ENCODE measurements at regions of chr6 and their contacts with region 1.

Region 1: GRCh38 chr6:30130887-30131862 is 4.8 kb upstream of the TRIM40 start:
- DNase-seq: peak; percentile 82 to 84
- ATAC-seq: peak; percentile 86 to 97
- H3K4me3 ChIP-seq: no peak overlapping the region
- H3K27ac ChIP-seq: peak overlapping the region; percentile 44 to 70; a peak in 4 of 6 replicates
- H3K4me1 ChIP-seq: peaks cover 26% of the 10 kb centered on the region
- CTCF ChIP-seq: peak; percentile 95
- EP300 ChIP-seq: no peak
- POLR2A ChIP-seq: no peak
- RAD21 ChIP-seq: peak; percentile 81 to 86

Region 2: GRCh38 chr6:29847871-29848630 is 283.1 kb before region 1 on chr6:
- CTCF ChIA-PET with region 1: interaction called, 13 read pairs
- POLR2A ChIA-PET with region 1: no interaction called
- DNase-seq: peak; percentile 58 to 60
- ATAC-seq: peak; percentile 94 to 99
- H3K4me3 ChIP-seq: no peak overlapping the region
- H3K27ac ChIP-seq: no peak overlapping the region
- H3K4me1 ChIP-seq: peaks cover 7% of the 10 kb centered on the region; the same call in 1 of the 3 replicates
- CTCF ChIP-seq: peak; percentile 86
- EP300 ChIP-seq: no peak
- POLR2A ChIP-seq: no peak
- RAD21 ChIP-seq: peak; percentile 97

Region 3: GRCh38 chr6:30097893-30098768 is 33.0 kb before region 1 on chr6:
- CTCF ChIA-PET with region 1: interaction called, 353 read pairs
- POLR2A ChIA-PET with region 1: interaction called, 5 read pairs
- DNase-seq: no peak
- ATAC-seq: no peak
- H3K4me3 ChIP-seq: no peak overlapping the region
- H3K27ac ChIP-seq: no peak overlapping the region
- H3K4me1 ChIP-seq: peaks cover 27% of the 10 kb centered on the region
- CTCF ChIP-seq: no peak
- EP300 ChIP-seq: no peak
- POLR2A ChIP-seq: no peak
- RAD21 ChIP-seq: no peak

Region 4: DNA sequence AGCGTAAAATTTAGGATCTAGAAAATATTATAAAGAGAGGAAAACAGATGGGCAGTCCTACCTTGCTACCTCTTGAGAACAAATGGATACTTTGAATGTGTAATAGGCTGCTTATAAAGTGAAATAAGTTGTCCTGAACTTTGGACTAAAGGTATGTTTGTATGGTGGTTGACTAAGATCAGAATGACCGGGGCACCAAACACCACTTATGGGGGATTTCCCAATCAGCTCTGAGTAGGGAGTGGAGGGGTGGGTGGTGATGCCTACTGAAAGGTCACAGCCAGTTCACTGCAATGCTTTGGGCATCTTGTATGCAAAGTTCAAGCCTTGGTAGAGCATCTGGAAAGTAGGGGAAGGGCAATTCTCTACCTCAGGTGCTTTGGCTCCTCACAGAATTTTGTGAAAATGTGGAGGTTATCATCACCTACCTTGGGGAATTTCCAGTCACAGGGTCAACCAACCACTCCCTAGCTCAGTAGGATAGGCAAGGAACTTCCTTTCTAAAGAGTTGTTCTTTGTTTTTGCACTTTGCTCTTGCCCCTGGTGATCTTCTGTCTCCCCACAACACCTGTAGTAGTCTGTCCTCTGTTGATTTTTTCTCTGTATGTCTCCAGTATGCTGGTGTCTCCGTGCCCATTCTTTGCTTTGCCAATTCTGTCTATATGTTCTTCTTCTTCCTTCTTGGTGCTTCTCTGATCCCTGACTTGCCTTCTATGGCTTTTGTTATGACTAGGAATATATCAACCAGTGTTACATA is 18.0 kb before region 1 on chr6 and contains the start of gene TRIM31:
- CTCF ChIA-PET with region 1: interaction called, 353 read pairs
- POLR2A ChIA-PET with region 1: no interaction called
- DNase-seq: peak in 1 of 2 experiments; percentile 37
- ATAC-seq: peak; percentile 54 to 85; a peak in 5 of 6 replicates
- H3K4me3 ChIP-seq: peak within 1 kb of the TSS; percentile 17; the same call in 2 of the 3 replicates
- H3K27ac ChIP-seq: peak within 1 kb of the TSS; percentile 58 to 73
- H3K4me1 ChIP-seq: peaks cover 29% of the 10 kb centered on the region
- CTCF ChIP-seq: no peak
- EP300 ChIP-seq: no peak
- POLR2A ChIP-seq: no peak
- RAD21 ChIP-seq: no peak
- polyA plus RNA-seq, gene TRIM31: 2.9 and 4.0 TPM in 2 replicates

Region 5: DNA sequence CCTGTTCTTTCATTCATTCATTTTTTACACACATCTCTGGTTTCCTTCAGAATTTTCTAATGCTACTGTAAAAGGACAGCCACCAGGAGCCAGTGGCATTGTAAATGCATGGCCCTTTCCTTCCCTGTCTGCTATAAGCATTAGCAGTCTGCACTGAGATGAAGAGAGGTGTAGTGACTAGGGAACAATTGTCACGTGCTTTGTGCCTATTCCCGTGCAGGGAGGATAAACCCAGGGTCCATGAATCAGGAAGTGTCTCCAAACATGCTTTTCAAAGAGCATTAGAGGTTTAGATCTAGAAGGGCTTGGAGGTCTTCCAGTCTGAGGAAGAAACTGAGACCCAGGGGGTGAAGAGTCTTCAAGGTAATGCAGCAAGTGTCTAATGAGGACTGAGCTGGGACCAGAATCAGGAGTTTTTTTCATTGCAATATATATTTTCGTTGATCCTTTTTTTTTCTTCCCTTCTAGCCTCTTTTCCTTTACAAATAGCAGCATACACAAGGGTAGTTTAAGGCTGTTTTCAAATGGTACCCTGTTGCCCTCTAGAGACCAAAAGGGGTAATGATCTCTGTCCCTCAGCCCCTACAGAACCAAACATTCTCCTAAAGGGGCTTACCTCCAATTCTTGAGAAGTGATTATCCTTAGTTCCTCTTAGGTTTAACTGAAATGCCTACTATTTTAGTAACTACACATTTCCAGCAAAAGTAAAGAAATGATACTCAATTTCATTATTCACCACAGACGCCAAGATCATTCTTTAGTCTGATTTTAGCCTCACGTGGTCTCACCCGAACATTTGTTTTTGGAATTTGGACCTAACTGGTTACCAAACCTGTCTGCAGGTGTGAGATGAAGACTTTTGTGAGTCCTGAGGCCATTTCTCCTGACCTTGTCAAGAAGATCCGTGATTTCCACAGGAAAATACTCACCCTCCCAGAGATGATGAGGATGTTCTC is 38.8 kb after region 1 on chr6:
- CTCF ChIA-PET with region 1: interaction called, 13 read pairs
- POLR2A ChIA-PET with region 1: no interaction called
- DNase-seq: peak; percentile 33 to 45
- ATAC-seq: peak; percentile 89 to 97; a peak in 5 of 6 replicates
- H3K4me3 ChIP-seq: no peak overlapping the region
- H3K27ac ChIP-seq: no peak overlapping the region
- H3K4me1 ChIP-seq: no peaks in the 10 kb centered on the region
- CTCF ChIP-seq: peak; percentile 69
- EP300 ChIP-seq: no peak
- POLR2A ChIP-seq: no peak
- RAD21 ChIP-seq: peak; percentile 77 to 81